ENCODE measurements at regions of chr3 and their contacts with region 1.

Region 1: DNA sequence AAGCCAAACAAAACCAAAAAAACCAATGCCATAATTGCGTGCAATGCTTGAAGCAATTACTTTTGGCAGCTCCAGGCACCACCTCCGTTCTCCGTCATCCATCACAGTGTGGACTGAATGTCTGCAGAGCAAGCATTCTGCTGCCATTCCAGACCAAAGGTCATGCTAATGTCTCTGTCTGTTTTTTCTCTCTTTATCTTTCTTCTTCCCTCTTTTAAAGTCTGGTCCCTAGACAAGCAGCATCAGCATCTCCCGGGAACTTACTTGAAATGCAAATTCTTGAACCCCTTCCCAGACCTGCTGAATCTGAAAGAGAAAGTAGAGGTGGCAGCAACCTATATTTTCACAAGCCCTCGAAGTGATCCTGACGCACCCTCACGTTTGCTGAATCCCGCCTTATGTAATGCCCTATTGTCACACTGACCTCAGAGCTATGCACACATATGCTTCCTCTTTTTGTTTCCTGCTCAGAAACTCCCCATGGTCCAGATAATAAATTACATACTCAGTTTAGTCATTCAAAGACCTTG is 297.3 kb upstream of the PROK2 start:
- DNase-seq: peak; percentile 80
- ATAC-seq: peak; percentile 79
- H3K4me3 ChIP-seq: peak overlapping the region; percentile 33; the same call in 1 of the 2 replicates
- H3K27ac ChIP-seq: peak overlapping the region; percentile 78
- H3K4me1 ChIP-seq: peaks cover 71% of the 10 kb centered on the region
- H3K27me3 ChIP-seq: no peaks in the 10 kb centered on the region
- CTCF ChIP-seq: no peak
- EP300 ChIP-seq: peak; percentile 46 to 69; a peak in 2 of 4 replicates
- POLR2A ChIP-seq: no peak
- RAD21 ChIP-seq: no peak

Region 2: GRCh38 chr3:71955240-71956068 is 126.8 kb before region 1 on chr3:
- CTCF ChIA-PET with region 1: interaction called, 14 read pairs
- POLR2A ChIA-PET with region 1: interaction called, 3 read pairs
- RAD21 ChIA-PET with region 1: interaction called, 12 read pairs
- SMC1A ChIA-PET with region 1: interaction called, 20 read pairs
- in situ Hi-C with region 1: no loop called
- intact Hi-C with region 1: loop called (anchors 5 kb)
- DNase-seq: peak; percentile 61
- ATAC-seq: peak; percentile 81
- H3K4me3 ChIP-seq: no peak overlapping the region
- H3K27ac ChIP-seq: no peak overlapping the region
- H3K4me1 ChIP-seq: peaks cover 22% of the 10 kb centered on the region
- H3K27me3 ChIP-seq: no peaks in the 10 kb centered on the region
- CTCF ChIP-seq: peak; percentile 46 to 81 (median 67); a peak in 5 of 6 replicates
- EP300 ChIP-seq: no peak
- POLR2A ChIP-seq: no peak
- RAD21 ChIP-seq: peak; percentile 85

Region 3: DNA sequence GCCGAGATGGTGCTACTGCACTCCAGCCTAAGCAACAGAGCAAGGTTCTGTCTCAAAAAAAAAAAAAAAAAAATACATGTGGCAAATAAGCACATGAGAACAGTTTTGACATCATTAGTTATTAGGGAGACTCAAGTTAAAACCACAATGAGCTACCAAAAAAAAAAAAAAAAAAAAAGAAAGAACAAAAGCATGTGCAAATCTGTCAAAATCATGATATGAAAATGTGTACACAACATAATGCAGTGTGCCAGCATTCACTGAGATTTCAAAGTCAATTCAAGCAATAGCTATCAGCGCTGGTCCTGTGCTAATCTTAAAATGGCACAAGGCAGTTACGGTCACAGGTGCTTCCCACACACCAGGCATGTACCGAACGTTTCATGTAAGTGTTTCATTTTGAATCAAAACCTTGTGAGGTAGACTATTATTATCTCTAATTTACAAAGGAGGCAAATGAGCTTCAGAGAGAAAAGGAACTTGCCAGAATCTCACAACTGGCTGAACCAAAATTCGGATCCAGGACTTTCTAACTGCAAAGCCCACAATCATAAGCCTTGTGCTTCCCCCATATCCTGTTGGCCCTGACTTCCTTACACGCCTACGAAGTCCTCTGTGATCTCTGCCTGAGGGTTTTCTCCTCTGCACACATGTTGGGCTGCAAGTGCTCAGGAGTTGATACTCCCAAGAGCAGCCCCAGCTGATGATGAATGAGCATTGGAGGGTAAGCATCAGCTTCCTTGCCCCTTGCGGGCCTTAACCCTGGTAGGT is 97.2 kb before region 1 on chr3:
- CTCF ChIA-PET with region 1: interaction called, 26 read pairs
- POLR2A ChIA-PET with region 1: interaction called, 10 read pairs
- RAD21 ChIA-PET with region 1: interaction called, 87 read pairs
- SMC1A ChIA-PET with region 1: interaction called, 92 read pairs
- in situ Hi-C with region 1: no loop called
- intact Hi-C with region 1: loop called (anchors 2 kb)
- DNase-seq: peak; percentile 97
- ATAC-seq: peak; percentile 89
- H3K4me3 ChIP-seq: peak overlapping the region; percentile 22; the same call in 1 of the 2 replicates
- H3K27ac ChIP-seq: peak overlapping the region; percentile 92
- H3K4me1 ChIP-seq: peaks cover 64% of the 10 kb centered on the region
- H3K27me3 ChIP-seq: no peaks in the 10 kb centered on the region
- CTCF ChIP-seq: no peak
- EP300 ChIP-seq: peak; percentile 90 to 95
- POLR2A ChIP-seq: no peak
- RAD21 ChIP-seq: peak; percentile 25; the same call in 1 of the 2 replicates

Region 4: GRCh38 chr3:72177083-72178050 is 95.1 kb after region 1 on chr3:
- CTCF ChIA-PET with region 1: no interaction called
- POLR2A ChIA-PET with region 1: interaction called, 3 read pairs
- RAD21 ChIA-PET with region 1: interaction called, 12 read pairs
- SMC1A ChIA-PET with region 1: interaction called, 4 read pairs
- in situ Hi-C with region 1: no loop called
- intact Hi-C with region 1: loop called (anchors 1 kb)
- DNase-seq: no peak
- ATAC-seq: peak; percentile 64
- H3K4me3 ChIP-seq: peak overlapping the region; percentile 39
- H3K27ac ChIP-seq: peak overlapping the region; percentile 85
- H3K4me1 ChIP-seq: peaks cover 29% of the 10 kb centered on the region
- H3K27me3 ChIP-seq: no peaks in the 10 kb centered on the region
- CTCF ChIP-seq: no peak
- EP300 ChIP-seq: peak; percentile 21 to 40; a peak in 2 of 4 replicates
- POLR2A ChIP-seq: no peak
- RAD21 ChIP-seq: no peak

Region 5: DNA sequence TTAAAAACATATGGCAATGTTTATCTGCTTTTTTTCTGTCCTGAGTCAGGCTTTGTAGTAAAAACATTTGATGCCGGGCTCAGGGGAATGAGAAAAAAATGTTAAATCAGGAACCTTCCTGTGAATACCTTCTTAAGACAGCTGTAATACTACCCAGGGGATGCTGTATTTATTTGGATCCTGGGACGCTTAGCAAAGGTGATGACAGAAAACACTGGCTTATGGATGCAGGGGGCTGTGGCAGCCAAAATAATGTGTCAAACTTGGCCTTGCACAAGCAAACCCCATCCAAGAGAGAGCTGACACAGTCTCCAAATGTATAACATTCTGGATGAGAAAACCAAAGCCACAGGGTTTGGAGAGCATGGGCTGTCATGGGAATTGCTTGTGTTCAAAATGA is 140.9 kb after region 1 on chr3:
- CTCF ChIA-PET with region 1: no interaction called
- POLR2A ChIA-PET with region 1: no interaction called
- RAD21 ChIA-PET with region 1: no interaction called
- SMC1A ChIA-PET with region 1: no interaction called
- in situ Hi-C with region 1: no loop called
- intact Hi-C with region 1: no loop called
- DNase-seq: no peak
- ATAC-seq: no peak
- H3K4me3 ChIP-seq: no peak overlapping the region
- H3K27ac ChIP-seq: no peak overlapping the region
- H3K4me1 ChIP-seq: no peaks in the 10 kb centered on the region
- H3K27me3 ChIP-seq: no peaks in the 10 kb centered on the region; a peak in 1 of 4 replicates
- CTCF ChIP-seq: no peak
- EP300 ChIP-seq: no peak
- POLR2A ChIP-seq: no peak
- RAD21 ChIP-seq: no peak

Region 6: GRCh38 chr3:72679540-72680198 is 597.4 kb after region 1 on chr3:
- CTCF ChIA-PET with region 1: no interaction called
- POLR2A ChIA-PET with region 1: no interaction called
- RAD21 ChIA-PET with region 1: no interaction called
- SMC1A ChIA-PET with region 1: no interaction called
- in situ Hi-C with region 1: no loop called
- intact Hi-C with region 1: loop called (anchors 10 kb)
- DNase-seq: no peak
- ATAC-seq: peak; percentile 32
- H3K4me3 ChIP-seq: no peak overlapping the region
- H3K27ac ChIP-seq: no peak overlapping the region
- H3K4me1 ChIP-seq: peaks cover 39% of the 10 kb centered on the region
- H3K27me3 ChIP-seq: no peaks in the 10 kb centered on the region
- CTCF ChIP-seq: no peak
- EP300 ChIP-seq: peak; percentile 20 to 49; a peak in 2 of 4 replicates
- POLR2A ChIP-seq: no peak
- RAD21 ChIP-seq: no peak